Activated CD4-positive, alpha-beta memory T cell treated with anti-CD3 and anti-CD28 coated beads for 36 hours (primary cell): ENCODE measurements at regions of chr2 and their contacts with region 1.

Region 1: DNA sequence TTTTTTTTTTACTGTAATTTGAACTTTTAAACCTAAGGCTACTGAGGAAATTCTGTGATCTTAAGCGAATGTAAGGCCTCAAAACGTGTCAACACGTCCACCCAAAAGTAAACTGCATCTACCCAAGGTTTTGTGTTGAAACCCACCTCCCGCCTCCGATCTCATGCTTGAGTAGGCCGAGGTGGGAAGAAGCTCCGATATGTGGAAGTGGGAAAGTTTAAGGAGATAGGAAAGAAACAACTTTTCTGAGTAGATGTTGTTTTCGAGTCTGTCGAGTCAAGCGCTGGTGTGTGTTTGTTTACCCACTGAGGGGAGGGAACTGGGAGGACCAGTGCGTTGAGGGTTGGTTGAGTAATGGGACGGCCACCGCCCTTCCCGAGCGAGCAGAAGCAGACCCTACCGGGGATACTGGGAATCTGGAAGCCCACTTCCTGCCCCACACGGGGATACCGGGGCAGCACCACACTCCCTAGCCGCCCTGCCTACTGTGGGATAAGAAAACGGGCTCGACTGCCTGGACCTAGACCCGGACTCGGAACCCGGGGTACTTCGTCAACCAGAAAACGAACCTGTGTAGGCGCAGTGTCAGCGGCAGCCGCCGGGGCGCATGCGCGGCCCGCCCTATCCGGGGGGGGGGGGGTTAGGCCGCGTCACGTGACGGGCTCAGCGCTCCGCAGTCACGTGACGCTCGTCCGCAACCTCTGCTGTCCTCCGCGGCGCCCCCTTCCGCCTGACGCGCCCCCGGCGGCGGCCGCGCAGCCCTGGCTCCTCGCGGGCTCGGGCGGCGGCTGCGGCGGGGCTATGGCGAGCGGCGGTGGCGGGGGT is at the start of gene RETREG2:
- DNase-seq: peak; percentile 86
- H3K4me3 Mint-ChIP-seq: peak within 1 kb of the TSS; percentile 95
- H3K27ac Mint-ChIP-seq: peak within 1 kb of the TSS; percentile 99
- H3K4me1 Mint-ChIP-seq: peaks cover 52% of the 10 kb centered on the region
- H3K27me3 Mint-ChIP-seq: no peaks in the 10 kb centered on the region
- total RNA-seq, gene RETREG2: 60.3 to 67.9 TPM

Region 2: DNA sequence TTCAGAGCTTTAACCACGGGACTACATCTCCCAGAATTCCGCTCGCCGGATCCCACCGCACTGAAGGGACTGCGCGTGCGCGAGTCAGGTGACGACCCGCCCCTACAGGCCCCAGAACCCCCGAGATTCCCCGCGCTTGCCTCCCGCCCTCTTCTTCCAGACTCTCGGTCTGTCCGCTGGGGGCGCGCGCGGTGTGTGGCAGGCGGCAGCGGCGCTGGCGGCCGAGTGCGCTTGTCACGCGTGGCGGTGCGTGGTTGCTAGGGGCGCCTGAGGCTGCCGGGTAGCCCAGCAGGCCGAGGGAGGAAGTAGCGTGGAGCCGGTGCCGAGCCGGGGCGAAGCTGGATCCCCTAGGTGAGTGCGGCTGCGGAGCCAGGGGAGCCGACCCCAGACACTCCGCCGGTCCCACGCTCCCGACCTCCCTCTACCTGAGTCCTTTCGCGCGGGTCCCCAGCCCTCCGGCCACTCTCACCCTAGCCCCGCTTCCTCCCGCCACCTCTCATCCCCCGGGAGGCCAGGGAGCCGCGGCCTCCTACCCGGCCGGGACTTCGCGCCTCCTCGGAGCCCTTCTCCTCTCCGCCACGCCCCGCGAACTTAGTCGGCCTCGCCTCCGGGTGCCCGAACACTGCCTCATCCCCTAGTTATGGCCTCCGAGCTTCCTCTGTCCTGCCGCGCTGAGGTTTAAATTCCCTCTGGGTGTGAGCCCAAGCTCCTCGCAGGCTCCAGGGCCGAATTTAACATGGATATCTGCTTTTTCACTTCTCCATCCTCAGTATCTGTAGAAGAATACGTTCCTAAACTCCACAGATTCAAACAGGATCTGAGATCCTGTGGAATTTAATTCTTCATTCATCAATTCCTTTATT is 466.8 kb before region 1 on chr2 and contains the start of gene TTLL4:
- CTCF ChIA-PET with region 1: no interaction called
- POLR2A ChIA-PET with region 1: no interaction called
- intact Hi-C with region 1: loop called (anchors 10 kb)
- DNase-seq: peak; percentile 99
- H3K4me3 Mint-ChIP-seq: peak within 1 kb of the TSS; percentile 88
- H3K27ac Mint-ChIP-seq: peak within 1 kb of the TSS; percentile 72
- H3K4me1 Mint-ChIP-seq: peaks cover 20% of the 10 kb centered on the region
- H3K27me3 Mint-ChIP-seq: no peaks in the 10 kb centered on the region
- total RNA-seq, gene TTLL4: 30.1 to 32.1 TPM

Region 3: DNA sequence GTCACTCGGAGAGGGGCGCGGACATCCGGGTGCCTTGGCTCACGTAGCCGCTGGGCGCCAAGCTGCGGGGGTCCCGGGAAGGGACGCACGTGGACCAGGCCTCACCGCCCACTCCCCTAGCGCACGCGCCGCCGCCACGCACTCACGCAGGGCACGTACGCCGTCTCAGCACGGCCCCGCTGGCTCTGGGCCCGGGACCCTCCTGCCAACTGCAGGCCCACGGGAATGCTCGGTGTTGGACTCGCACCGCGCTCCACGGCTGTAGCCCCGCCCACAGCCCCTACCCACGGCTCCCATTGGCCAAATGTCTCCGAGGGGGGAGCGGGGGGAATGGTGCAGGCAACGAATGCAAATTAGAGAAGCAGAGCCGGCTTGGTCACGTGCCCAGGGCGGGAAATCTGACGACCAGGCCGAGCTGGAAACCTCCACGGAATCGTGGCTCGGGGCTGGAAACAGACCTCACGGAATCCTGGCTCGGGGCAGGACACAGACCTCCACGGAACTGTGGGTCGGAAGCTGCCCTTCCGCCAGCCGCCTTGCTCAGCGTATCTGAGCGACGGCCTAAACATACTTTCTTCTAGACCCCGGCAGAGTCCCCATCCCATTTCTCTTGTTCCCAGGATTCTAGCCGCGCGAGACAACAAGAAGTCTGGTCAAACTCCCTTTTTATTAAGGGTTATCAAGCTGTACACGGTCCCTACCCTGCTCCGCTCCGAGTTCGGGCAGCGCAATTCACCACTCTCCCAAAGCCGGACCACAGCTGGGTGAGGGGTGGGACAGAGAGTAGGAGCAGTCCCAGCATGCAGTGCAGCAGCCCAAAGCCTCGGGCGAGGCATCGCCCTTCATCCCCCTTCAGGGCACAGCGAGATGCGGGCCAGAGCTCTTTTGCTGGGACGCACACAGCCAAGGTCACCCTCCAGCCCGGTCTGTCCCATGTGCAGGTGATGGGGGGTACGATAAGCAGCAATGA is 41.3 kb after region 1 on chr2 and contains the start of gene ABCB6:
- CTCF ChIA-PET with region 1: interaction called, 6 read pairs
- POLR2A ChIA-PET with region 1: interaction called, 10 read pairs
- intact Hi-C with region 1: no loop called
- DNase-seq: peak; percentile 92
- H3K4me3 Mint-ChIP-seq: peak within 1 kb of the TSS; percentile 80
- H3K27ac Mint-ChIP-seq: peak within 1 kb of the TSS; percentile 69
- H3K4me1 Mint-ChIP-seq: peaks cover 19% of the 10 kb centered on the region
- H3K27me3 Mint-ChIP-seq: no peaks in the 10 kb centered on the region
- total RNA-seq, gene ABCB6: 11.5 to 11.7 TPM

Region 4: DNA sequence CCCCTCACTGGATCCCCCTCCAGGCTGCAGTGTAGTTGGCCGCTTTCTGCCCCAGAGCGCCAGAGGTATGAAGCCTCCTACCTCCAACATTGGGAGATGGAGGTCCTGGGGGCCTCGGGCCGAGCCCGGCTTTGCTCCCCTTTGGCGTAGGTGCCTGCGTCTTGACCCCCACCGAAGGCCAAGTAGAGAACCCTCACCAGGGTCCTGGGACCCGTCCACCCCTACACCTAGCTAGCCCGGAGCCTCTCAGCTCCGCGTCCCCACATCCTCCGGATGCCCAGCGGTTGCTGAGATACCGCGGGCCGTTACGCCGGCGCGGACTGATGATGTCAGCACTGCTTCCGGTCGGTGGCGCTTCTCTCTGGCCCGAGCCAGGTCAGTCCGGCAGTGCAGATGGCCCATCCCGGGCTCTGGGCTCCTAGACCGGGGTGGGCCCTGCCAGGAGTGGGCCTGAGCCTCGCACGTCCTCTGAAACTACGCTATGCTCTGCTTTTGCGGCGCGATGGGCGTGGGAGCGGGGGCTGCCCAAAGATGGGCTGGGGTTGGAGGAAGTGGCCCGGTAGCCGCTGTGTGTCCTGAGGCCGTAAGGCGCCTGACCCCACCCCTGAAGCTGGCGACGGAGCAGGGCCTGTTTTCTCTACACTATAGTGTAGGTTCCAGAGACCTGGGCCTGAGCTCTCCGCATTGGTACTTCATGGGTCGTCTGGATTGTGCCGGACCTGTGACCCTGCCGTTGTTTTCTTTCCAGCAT is 67.6 kb after region 1 on chr2 and contains the starts of genes GLB1L and STK16:
- CTCF ChIA-PET with region 1: interaction called, 14 read pairs
- POLR2A ChIA-PET with region 1: interaction called, 10 read pairs
- intact Hi-C with region 1: no loop called
- DNase-seq: peak; percentile 95
- H3K4me3 Mint-ChIP-seq: peak within 1 kb of the TSS; percentile 98
- H3K27ac Mint-ChIP-seq: peak within 1 kb of the TSS; percentile 98
- H3K4me1 Mint-ChIP-seq: peaks cover 61% of the 10 kb centered on the region
- H3K27me3 Mint-ChIP-seq: no peaks in the 10 kb centered on the region
- total RNA-seq, gene GLB1L: 4.8 to 4.9 TPM
- total RNA-seq, gene STK16: 37.1 to 37.8 TPM

Region 5: DNA sequence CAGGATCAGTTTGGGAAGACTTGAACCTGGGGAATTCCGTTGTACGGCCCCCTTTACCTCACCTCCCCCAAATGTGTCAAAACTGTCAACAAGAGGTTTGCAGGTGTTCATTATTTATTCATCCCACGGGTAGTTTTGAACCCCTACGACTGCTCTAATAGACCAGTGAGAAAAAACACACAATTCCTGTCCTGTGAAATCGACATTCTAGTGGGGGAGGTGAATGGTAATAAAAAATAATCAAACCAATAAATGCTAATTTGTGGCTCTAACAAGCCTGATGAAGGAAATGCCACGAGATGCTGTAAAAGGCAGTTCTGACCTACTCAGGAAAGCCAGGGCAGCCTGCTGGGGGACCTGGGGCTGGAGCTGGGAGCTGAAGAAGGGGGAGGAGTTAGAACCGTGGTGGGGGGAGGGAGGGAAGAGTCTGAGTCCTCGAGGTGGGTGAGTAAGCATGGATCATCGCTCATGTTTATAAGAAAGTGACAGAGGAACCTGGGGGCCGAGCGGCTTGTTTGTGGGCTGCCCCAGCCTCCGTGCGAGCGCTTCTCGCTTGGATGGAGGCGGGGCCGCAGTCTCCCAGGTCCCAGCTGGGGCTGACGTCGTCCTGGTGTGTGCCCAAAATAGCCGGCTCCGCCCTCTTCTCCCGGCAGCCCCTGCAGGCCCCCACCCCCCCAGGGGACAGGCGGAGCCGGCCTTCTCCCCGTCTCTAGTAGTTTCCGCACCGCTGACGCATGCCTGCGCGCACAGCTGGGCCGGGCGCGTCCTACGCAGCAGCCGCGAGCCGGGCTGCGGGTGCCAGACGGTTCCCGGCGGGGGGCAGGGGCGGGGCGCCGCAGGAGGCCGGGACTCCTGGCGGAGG is 101.1 kb after region 1 on chr2 and contains the start of gene DNAJB2:
- CTCF ChIA-PET with region 1: interaction called, 9 read pairs
- POLR2A ChIA-PET with region 1: interaction called, 10 read pairs
- intact Hi-C with region 1: loop called (anchors 1 kb)
- DNase-seq: peak; percentile 100
- H3K4me3 Mint-ChIP-seq: peak within 1 kb of the TSS; percentile 80
- H3K27ac Mint-ChIP-seq: peak within 1 kb of the TSS; percentile 95
- H3K4me1 Mint-ChIP-seq: peaks cover 43% of the 10 kb centered on the region
- H3K27me3 Mint-ChIP-seq: no peaks in the 10 kb centered on the region
- total RNA-seq, gene DNAJB2: 37.3 to 39.1 TPM